ENCODE measurements at regions of chr12 and their contacts with region 1.

Region 1: GRCh38 chr12:4526923-4527546 is 11.7 kb upstream of the RAD51AP1 start:
- DNase-seq: no peak
- H3K4me3 ChIP-seq: no peak overlapping the region
- H3K27ac ChIP-seq: no peak overlapping the region
- H3K4me1 ChIP-seq: no peaks in the 10 kb centered on the region
- H3K27me3 ChIP-seq: no peaks in the 10 kb centered on the region
- CTCF ChIP-seq: peak; percentile 86

Region 2: GRCh38 chr12:4356041-4356327 is 171.1 kb before region 1 on chr12:
- CTCF ChIA-PET with region 1: interaction called, 5 read pairs
- POLR2A ChIA-PET with region 1: no interaction called
- intact Hi-C with region 1: loop called (anchors 1 kb)
- DNase-seq: peak in 1 of 2 experiments; percentile 36
- H3K4me3 ChIP-seq: no peak overlapping the region
- H3K27ac ChIP-seq: no peak overlapping the region
- H3K4me1 ChIP-seq: no peaks in the 10 kb centered on the region
- H3K27me3 ChIP-seq: peaks cover 3% of the 10 kb centered on the region; the same call in 1 of the 2 replicates
- CTCF ChIP-seq: peak; percentile 57

Region 3: DNA sequence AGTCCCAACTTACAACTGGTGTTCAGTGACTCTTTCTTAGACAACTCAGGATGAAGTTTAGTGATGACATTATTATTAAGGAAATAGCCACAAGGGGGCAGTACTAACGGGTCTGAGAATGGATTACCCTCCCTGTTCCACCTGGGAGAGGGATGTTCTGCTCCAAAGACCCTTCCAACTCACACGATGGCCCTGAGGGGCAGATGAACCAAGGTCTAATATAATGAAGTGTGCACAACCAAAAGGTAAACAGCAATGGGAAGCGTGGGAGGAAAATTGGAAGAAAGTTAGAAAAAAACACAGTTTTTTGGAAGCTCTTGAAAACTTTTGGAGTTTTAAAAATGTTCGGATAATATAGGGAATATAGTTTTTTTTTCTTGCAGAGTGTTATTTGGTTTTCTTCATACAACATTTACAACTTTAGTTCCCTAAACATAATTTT is 105.4 kb before region 1 on chr12:
- CTCF ChIA-PET with region 1: no interaction called
- POLR2A ChIA-PET with region 1: no interaction called
- intact Hi-C with region 1: loop called (anchors 5 kb)
- DNase-seq: peak in 1 of 2 experiments; percentile 6
- H3K4me3 ChIP-seq: no peak overlapping the region
- H3K27ac ChIP-seq: no peak overlapping the region
- H3K4me1 ChIP-seq: no peaks in the 10 kb centered on the region
- H3K27me3 ChIP-seq: peaks cover 83% of the 10 kb centered on the region
- CTCF ChIP-seq: peak; percentile 85

Measured in PC-9 (cell line).